ENCODE measurements at regions of chr12 and their contacts with region 1.

Region 1: DNA sequence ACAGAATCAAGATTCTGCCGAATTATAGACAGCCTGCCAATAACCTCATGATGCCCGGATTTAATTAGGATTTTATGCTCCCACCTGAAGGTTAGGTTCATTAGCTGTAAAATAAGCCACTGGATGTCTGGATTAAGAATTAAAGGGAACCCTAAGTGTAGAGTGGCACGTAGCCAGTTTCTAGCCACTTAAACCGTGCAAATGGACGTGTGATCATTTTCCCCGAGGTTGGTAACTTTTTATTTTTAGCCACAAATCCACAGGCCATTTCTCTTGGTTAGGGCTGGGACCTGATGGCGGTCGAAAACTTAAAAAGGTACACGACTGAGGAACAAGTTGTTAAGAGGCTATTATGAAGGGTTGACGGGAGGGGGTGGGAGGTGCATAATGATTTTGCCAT is 127.3 kb upstream of the TMPO start:
- DNase-seq: no peak
- H3K4me3 ChIP-seq: no peak overlapping the region
- H3K27ac ChIP-seq: no peak overlapping the region
- H3K4me1 ChIP-seq: no peaks in the 10 kb centered on the region
- H3K27me3 ChIP-seq: no peaks in the 10 kb centered on the region
- CTCF ChIP-seq: no peak
- POLR2A ChIP-seq: no peak

Region 2: GRCh38 chr12:97159362-97159761 is 1228.8 kb before region 1 on chr12:
- intact Hi-C with region 1: loop called (anchors 10 kb)
- DNase-seq: no peak
- H3K4me3 ChIP-seq: no peak overlapping the region
- H3K27ac ChIP-seq: no peak overlapping the region
- H3K4me1 ChIP-seq: no peaks in the 10 kb centered on the region
- H3K27me3 ChIP-seq: no peaks in the 10 kb centered on the region
- CTCF ChIP-seq: no peak
- POLR2A ChIP-seq: no peak

Region 3: GRCh38 chr12:98439981-98440581 is 52.0 kb after region 1 on chr12:
- intact Hi-C with region 1: no loop called
- DNase-seq: no peak
- H3K4me3 ChIP-seq: peak overlapping the region in 1 of 8 donors; percentile 27
- H3K27ac ChIP-seq: peak overlapping the region; percentile 15 to 84 (median 72)
- H3K4me1 ChIP-seq: peaks cover 0 to 33% (median 13%) of the 10 kb centered on the region in 6 donors
- H3K27me3 ChIP-seq: peaks cover 0 to 17% (median 0%) of the 10 kb centered on the region in 7 donors
- CTCF ChIP-seq: no peak
- POLR2A ChIP-seq: no peak

Measured in spleen (tissue), 13 donors.